CD4-positive, alpha-beta memory T cell (primary cell): ENCODE measurements at regions of chr17 and their contacts with region 1.

Region 1: DNA sequence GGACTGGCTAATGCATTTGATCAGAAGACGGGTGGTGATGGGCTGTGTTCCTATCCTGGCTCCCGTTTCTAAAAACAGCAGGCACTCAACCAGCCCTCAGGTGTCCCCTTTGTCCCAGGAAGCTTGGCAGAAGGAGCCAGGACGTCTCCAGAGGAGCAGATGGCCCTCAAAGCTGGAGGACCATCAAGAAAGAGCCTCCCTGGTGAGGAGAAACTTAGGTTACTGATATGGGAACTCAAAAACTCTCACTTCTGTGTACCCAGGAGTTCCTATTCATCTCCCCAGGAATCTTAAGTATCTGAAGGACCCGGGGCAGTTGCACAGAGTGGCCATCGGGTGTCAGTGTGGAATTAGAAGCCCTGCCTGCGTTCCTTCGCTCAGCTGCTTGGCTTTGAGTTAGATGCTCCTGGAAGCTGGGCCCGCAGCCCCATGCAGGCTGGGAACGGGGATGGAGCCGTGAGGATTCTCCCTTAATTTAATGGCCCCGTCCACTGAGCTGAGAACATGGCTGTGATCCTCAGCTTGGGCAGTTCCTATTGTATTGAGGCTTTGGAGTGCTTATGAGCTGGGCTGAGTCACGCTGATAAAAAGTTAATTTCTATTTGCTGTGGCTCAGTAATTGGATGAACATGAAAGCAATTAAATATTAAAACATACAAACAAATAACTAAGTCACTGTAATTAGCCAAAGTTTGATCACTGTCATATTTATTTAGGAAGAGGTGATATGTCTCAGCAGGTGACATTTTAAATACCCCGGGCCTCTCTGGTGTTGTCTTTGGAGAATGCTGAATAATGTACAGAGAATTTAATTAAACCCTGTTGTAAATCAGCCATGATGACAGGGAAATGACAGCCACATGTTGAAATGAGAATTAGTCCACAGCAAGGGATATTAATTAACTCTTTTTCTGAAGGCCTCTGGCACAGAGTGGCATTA is 402.1 kb downstream of the SEC14L1 start:
- DNase-seq: peak; percentile 49 to 60 (median 57)
- H3K4me3 ChIP-seq: no peak overlapping the region
- H3K4me3 Mint-ChIP-seq: no peak overlapping the region
- H3K27ac ChIP-seq: no peak overlapping the region
- H3K27ac Mint-ChIP-seq: peak overlapping the region in 1 of 7 donors; percentile 9
- H3K4me1 ChIP-seq: no peaks in the 10 kb centered on the region
- H3K4me1 Mint-ChIP-seq: no peaks in the 10 kb centered on the region
- H3K27me3 ChIP-seq: peaks cover 7% of the 10 kb centered on the region
- H3K27me3 Mint-ChIP-seq: peaks cover 3 to 14% of the 10 kb centered on the region in 2 donors

Region 2: GRCh38 chr17:77484111-77484510 is 58.7 kb before region 1 on chr17:
- CTCF ChIA-PET with region 1: no interaction called
- POLR2A ChIA-PET with region 1: no interaction called
- intact Hi-C with region 1: no loop called
- DNase-seq: no peak
- H3K4me3 ChIP-seq: no peak overlapping the region
- H3K4me3 Mint-ChIP-seq: no peak overlapping the region
- H3K27ac ChIP-seq: no peak overlapping the region
- H3K27ac Mint-ChIP-seq: no peak overlapping the region
- H3K4me1 ChIP-seq: peaks cover 74% of the 10 kb centered on the region
- H3K4me1 Mint-ChIP-seq: peaks cover 8 to 31% (median 14%) of the 10 kb centered on the region in 4 donors
- H3K27me3 ChIP-seq: no peaks in the 10 kb centered on the region
- H3K27me3 Mint-ChIP-seq: no peaks in the 10 kb centered on the region

Region 3: GRCh38 chr17:77494664-77495435 is 48.0 kb before region 1 on chr17:
- CTCF ChIA-PET with region 1: no interaction called
- POLR2A ChIA-PET with region 1: no interaction called
- intact Hi-C with region 1: no loop called
- DNase-seq: peak; percentile 64 to 78 (median 70)
- H3K4me3 ChIP-seq: no peak overlapping the region
- H3K4me3 Mint-ChIP-seq: peak overlapping the region in 2 of 8 donors; percentile 5 to 35
- H3K27ac ChIP-seq: peak overlapping the region; percentile 10
- H3K27ac Mint-ChIP-seq: peak overlapping the region; percentile 57 to 94 (median 87)
- H3K4me1 ChIP-seq: peaks cover 41% of the 10 kb centered on the region
- H3K4me1 Mint-ChIP-seq: peaks cover 8 to 45% (median 17%) of the 10 kb centered on the region in 4 donors
- H3K27me3 ChIP-seq: no peaks in the 10 kb centered on the region
- H3K27me3 Mint-ChIP-seq: no peaks in the 10 kb centered on the region

Region 4: DNA sequence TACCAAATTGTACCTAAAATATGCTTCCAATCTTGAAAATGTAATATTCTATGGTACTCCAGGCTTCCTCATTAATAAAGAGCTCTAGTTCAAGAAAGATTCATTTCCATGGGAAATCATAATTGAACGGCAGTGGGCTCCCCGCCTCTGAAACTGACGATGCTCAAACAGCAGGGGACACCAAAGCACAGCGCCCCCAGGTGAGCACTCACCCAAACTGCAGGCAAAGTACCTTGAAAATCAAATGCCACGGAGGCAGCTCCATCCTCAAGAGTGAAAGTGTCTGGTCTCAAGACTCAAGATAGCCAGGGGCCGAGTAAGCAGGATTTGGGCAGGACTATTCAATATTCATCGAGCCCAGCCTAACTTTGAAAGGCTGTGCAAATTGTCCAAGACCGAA is 198.3 kb after region 1 on chr17:
- CTCF ChIA-PET with region 1: interaction called, 9 read pairs
- POLR2A ChIA-PET with region 1: no interaction called
- intact Hi-C with region 1: loop called (anchors 1 kb)
- DNase-seq: peak in 3 of 5 donors; percentile 6 to 41 (median 30)
- H3K4me3 ChIP-seq: no peak overlapping the region
- H3K4me3 Mint-ChIP-seq: no peak overlapping the region
- H3K27ac ChIP-seq: no peak overlapping the region
- H3K27ac Mint-ChIP-seq: no peak overlapping the region
- H3K4me1 ChIP-seq: no peaks in the 10 kb centered on the region
- H3K4me1 Mint-ChIP-seq: no peaks in the 10 kb centered on the region
- H3K27me3 ChIP-seq: no peaks in the 10 kb centered on the region
- H3K27me3 Mint-ChIP-seq: peaks cover 2 to 5% of the 10 kb centered on the region in 2 donors

Region 5: GRCh38 chr17:78013683-78014467 is 471.1 kb after region 1 on chr17:
- CTCF ChIA-PET with region 1: interaction called, 121 read pairs
- POLR2A ChIA-PET with region 1: no interaction called
- intact Hi-C with region 1: loop called (anchors 1 kb)
- DNase-seq: peak; percentile 54 to 62 (median 60)
- H3K4me3 ChIP-seq: no peak overlapping the region
- H3K4me3 Mint-ChIP-seq: no peak overlapping the region
- H3K27ac ChIP-seq: no peak overlapping the region
- H3K27ac Mint-ChIP-seq: peak overlapping the region; percentile 3 to 65 (median 30)
- H3K4me1 ChIP-seq: peaks cover 11% of the 10 kb centered on the region
- H3K4me1 Mint-ChIP-seq: peaks cover 21 to 44% (median 29%) of the 10 kb centered on the region in 4 donors
- H3K27me3 ChIP-seq: no peaks in the 10 kb centered on the region
- H3K27me3 Mint-ChIP-seq: no peaks in the 10 kb centered on the region